BJ (cell line): ENCODE measurements at regions of chr7 and their contacts with region 1.

Region 1: DNA sequence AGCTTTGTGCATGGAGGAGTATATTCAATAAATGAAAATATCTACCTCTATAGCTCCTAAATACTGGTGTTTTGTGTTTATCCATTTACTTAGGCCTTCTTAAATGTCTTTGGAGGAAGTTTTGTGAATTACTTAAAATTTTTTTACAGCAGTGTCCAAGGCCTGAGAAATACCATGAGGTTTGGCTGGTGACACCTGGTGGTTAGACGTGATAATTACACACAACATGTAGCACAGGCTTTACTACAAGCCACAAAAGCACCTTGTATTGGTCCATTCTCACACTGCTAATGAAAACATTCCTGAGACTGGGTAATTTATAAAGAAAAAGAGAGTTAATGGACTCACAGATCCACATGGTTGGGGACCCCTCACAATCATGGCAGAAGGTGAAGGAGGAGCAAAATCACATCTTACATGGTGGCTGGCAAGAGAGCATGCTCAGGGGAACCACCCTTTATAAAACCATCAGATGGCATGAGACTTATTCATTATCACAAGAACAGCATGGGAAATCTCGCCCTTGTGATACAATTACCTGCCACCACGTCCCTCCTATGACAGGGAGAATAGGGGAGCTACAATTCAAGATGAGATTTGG is 20.6 kb downstream of the HYAL4 start:
- DNase-seq: peak; percentile 9
- H3K4me3 ChIP-seq: no peak overlapping the region
- H3K27me3 ChIP-seq: peaks cover 2% of the 10 kb centered on the region; the same call in 1 of the 2 replicates
- CTCF ChIP-seq: peak; percentile 62

Region 2: GRCh38 chr7:123635551-123636359 is 229.9 kb before region 1 on chr7:
- CTCF ChIA-PET with region 1: interaction called, 16 read pairs
- POLR2A ChIA-PET with region 1: no interaction called
- DNase-seq: no peak
- H3K4me3 ChIP-seq: no peak overlapping the region
- H3K27me3 ChIP-seq: no peaks in the 10 kb centered on the region
- CTCF ChIP-seq: peak; percentile 68

Region 3: GRCh38 chr7:123682690-123683089 is 182.9 kb before region 1 on chr7:
- CTCF ChIA-PET with region 1: interaction called, 23 read pairs
- POLR2A ChIA-PET with region 1: no interaction called
- DNase-seq: peak; percentile 28
- H3K4me3 ChIP-seq: no peak overlapping the region
- H3K27me3 ChIP-seq: no peaks in the 10 kb centered on the region
- CTCF ChIP-seq: peak; percentile 55

Region 4: DNA sequence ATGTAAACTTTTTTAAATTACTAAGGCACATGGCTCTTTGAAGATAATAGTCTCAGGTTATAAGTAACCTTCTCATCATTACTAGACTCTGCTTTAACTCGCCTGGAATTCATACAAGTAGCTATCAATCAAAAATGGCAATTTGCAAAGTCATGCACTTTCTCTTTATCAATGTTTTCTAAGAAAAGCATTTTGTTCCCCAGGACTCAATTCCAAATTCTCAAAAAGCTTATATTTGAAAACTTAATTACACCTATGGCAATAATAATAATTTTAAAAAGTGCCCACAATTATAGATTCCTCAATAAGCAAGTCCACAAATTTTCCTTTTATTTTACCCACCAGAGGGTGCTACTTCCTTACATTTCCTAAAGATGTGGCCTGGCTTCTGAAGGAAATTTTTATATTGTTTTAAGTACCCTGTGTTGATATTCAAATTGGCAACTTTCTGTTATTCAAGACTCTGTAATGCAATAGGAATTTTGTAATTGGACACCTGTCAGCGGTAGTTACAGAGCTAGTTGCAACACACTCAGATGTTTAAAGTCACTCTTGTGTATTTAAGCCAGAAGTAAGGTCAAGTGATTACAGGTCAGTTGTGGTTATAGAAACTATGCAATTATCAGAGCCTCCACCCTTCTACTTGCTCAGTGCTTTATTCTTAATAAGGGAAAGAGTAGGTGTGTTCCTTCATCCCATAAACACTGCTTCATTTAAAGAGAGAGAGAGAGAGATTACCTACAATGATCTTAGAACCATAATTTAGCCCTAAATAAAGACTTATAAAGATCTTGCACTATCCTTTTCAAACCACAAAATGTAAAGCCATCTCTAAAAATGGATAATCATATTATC is 67.7 kb before region 1 on chr7:
- CTCF ChIA-PET with region 1: interaction called, 21 read pairs
- POLR2A ChIA-PET with region 1: no interaction called
- DNase-seq: peak; percentile 59
- H3K4me3 ChIP-seq: no peak overlapping the region
- H3K27me3 ChIP-seq: no peaks in the 10 kb centered on the region
- CTCF ChIP-seq: peak; percentile 49

Region 5: DNA sequence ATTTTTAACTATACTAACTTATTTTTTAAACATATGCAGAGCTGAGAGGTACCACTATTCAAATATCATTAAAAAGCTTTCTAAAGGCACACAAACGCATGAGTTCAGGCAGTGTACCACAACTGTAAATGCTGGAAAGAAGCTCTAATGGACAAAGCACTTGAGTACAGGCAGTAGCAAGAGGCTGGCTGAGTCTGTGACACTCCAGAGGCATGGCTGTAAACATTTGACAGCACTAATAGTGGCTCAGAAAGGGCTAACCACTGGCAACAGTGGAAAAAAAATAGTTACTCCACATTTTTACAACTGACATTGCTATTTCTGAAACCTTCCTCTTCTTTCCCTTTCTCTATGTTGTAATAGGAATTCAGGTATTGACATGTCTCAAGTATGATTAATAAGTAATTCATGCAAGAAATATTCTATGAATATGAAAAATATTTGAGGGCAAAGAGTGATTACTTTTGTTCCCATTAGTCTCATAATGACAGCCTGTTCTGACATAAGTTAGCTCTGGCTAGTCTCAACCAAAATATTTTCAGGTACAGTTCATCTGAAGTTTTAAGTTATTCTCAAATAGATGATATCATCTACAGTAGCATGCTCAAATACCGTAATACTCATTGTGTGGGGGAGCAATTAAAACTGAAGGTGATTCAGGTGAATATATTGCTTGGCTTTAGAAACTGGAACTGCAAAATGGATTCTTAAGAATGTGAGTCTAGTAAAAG is 1388.0 kb after region 1 on chr7:
- CTCF ChIA-PET with region 1: no interaction called
- POLR2A ChIA-PET with region 1: no interaction called
- DNase-seq: no peak
- H3K4me3 ChIP-seq: no peak overlapping the region
- H3K27me3 ChIP-seq: no peaks in the 10 kb centered on the region
- CTCF ChIP-seq: no peak